ENCODE measurements at regions of chr4 and their contacts with region 1.

Region 1: GRCh38 chr4:16524911-16525554 is 298.8 kb upstream of the TAPT1 start:
- DNase-seq: peak; percentile 14 to 39
- H3K4me3 ChIP-seq: no peak overlapping the region
- H3K27ac ChIP-seq: peak overlapping the region in 1 of 3 donors; percentile 27
- H3K4me1 ChIP-seq: peaks cover 0 to 9% of the 10 kb centered on the region in 2 donors
- H3K27me3 ChIP-seq: no peaks in the 10 kb centered on the region
- CTCF ChIP-seq: no peak
- POLR2A ChIP-seq: no peak

Region 2: DNA sequence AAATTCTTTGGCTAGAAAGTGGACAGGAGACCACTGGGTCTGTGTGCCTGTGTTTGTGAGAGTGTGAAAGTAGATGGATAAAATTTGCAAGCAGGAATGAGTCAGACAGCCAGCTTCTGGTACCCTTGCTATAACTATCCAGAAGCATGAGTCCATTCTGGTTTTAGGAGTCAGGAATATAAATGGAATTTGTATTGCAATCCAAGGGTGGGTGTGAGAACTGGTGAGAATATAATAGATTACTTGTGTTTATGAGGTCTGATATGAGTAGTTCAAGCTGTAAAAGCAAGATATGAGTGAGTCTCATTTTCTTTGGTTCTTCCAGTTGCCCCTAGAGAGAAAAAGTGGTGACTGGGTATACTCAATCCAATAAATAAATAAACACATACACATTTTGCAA is 86.0 kb before region 1 on chr4:
- intact Hi-C with region 1: no loop called
- DNase-seq: no peak
- H3K4me3 ChIP-seq: no peak overlapping the region
- H3K27ac ChIP-seq: no peak overlapping the region
- H3K4me1 ChIP-seq: peaks cover 6 to 7% of the 10 kb centered on the region in 2 donors
- H3K27me3 ChIP-seq: no peaks in the 10 kb centered on the region
- CTCF ChIP-seq: no peak
- POLR2A ChIP-seq: no peak

Region 3: DNA sequence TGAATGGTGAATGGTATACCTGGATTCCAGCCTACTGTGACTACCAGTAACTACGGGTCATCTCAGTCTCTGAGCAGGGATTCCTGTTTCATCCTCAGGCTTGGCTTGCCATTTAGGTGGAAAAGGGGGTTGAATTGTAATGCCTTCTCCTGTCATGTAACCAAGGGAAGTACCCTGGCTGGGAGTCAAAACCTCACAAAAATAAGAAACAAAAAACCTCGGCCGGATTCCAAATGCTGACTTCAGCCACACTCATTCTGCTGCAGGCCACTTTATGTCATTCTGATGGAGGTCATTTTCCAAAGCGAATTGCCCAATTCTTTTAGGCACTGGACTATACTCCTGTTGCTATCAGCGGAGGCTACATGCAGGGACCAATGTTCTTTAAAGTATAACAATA is 48.7 kb after region 1 on chr4:
- intact Hi-C with region 1: loop called (anchors 10 kb)
- DNase-seq: peak; percentile 19 to 29
- H3K4me3 ChIP-seq: no peak overlapping the region
- H3K27ac ChIP-seq: no peak overlapping the region
- H3K4me1 ChIP-seq: peaks cover 0 to 25% of the 10 kb centered on the region in 2 donors
- H3K27me3 ChIP-seq: no peaks in the 10 kb centered on the region
- CTCF ChIP-seq: no peak
- POLR2A ChIP-seq: no peak

Region 4: GRCh38 chr4:16909281-16909680 is 384.2 kb after region 1 on chr4:
- intact Hi-C with region 1: loop called (anchors 10 kb)
- DNase-seq: no peak
- H3K4me3 ChIP-seq: no peak overlapping the region
- H3K27ac ChIP-seq: no peak overlapping the region
- H3K4me1 ChIP-seq: no peaks in the 10 kb centered on the region
- H3K27me3 ChIP-seq: no peaks in the 10 kb centered on the region
- CTCF ChIP-seq: no peak
- POLR2A ChIP-seq: no peak

Measured in thyroid gland (tissue), 4 donors.